Sigmoid colon (tissue), 7 donors: ENCODE measurements at regions of chr11 and their contacts with region 1.

Region 1: DNA sequence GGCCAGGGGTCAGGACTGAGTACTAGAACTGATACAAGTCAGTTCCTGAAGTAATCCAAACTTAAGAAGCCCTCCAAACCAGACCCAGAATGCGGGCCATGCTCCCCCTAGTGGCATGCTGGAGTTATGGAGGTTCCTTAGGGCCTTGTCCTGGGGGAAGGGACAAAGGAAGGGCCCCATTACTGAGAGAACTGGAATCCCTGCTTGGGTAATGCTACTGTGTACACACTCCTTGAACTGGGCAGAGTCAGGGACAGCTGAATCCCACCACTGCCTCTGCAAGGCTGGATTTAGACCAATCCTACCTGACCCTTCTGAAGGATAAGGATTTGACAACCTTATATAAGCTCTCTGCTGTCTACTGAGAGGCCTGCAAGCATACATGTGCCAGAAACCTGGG is 97.3 kb upstream of the AKIP1 start:
- DNase-seq: peak; percentile 92
- H3K4me3 ChIP-seq: no peak overlapping the region
- H3K27ac ChIP-seq: peak overlapping the region; percentile 33 to 97 (median 96)
- H3K4me1 ChIP-seq: peaks cover 0 to 35% (median 30%) of the 10 kb centered on the region in 4 donors
- H3K27me3 ChIP-seq: no peaks in the 10 kb centered on the region
- CTCF ChIP-seq: peak; percentile 82 to 92 (median 86)
- EP300 ChIP-seq: no peak
- POLR2A ChIP-seq: no peak

Region 2: DNA sequence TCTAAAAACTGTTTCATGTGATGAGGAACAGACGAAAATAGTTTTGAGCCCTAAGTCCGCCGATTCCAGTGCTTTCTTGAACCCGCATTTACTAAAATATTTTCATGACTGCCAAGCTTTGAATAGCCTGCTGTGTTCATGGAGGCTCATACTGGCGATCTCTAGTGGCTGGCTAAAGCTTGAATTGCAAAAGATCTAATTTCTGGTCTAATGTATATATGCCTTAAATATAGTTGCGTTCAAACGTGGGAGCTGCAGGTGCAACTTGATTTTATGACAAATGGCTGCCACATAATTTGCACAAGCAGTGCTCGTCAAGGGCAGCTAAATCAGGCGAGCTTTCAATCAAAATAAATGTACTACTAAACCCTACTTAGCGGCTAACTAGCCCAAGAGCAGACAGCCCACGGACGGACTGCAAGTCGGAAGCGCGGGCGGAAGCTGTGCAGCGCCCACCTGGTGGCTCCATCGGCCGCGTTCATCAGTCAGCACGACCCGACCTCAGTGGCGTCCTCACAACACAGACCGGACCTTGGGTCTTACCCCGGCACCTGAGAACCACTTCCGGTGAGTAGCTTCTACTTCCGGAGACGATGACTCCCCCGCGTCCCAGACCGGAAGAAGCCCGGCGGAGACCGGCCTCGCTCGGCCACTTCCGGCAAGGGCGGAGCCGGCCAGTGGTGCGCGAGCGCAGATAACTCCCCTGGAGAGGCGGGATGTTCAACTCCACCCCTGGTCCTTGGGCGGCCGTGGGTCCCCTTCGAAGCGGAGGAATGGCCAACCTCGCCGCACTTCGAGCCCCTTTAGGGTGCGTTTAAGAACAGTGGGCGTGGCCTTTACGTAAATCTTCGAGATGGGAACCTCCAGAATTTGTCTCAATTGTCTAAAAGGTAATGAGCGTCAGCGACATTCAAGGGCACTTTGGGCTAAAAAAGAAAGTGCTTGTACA is 125.0 kb before region 1 on chr11:
- intact Hi-C with region 1: loop called (anchors 2 kb)
- DNase-seq: peak; percentile 97
- H3K4me3 ChIP-seq: peak overlapping the region; percentile 42 to 64 (median 56)
- H3K27ac ChIP-seq: peak overlapping the region; percentile 83 to 89 (median 88)
- H3K4me1 ChIP-seq: peaks cover 0 to 35% (median 23%) of the 10 kb centered on the region in 4 donors
- H3K27me3 ChIP-seq: no peaks in the 10 kb centered on the region
- CTCF ChIP-seq: no peak
- EP300 ChIP-seq: peak in 1 of 4 donors; percentile 50
- POLR2A ChIP-seq: peak; percentile 41 to 64

Region 3: DNA sequence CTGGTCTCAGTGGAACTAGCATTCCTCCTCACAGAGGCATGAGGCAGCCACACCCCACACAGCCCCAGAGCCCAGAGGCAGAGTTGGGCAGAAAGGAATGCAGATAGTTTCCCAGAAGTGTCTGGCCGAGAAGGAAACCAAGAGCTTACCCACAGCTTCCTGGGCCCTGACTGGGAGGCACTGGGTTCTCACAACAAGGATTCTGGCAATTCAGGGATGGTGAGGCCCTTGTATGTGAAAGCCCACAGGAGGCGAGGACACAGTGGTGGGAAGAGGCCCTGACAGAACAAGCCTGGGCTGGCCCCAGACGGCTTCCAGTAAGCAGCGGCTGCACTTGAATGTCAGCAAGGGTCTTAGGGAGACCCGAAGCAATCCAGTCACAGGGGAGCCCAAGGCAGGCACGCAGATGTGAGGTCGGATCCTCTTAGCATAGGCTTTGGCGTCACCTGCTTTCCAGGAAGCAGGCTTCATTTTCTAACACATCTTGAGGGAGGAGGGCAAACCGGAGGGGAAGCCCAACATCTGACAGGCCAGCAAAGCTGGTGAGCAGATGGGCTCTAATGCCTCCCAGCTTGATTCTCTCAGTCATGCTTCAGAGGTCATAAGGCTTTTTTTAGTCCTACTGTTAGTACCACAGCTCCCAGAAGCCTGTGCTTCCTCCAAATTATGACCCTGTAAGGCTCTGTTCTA is 19.1 kb after region 1 on chr11:
- intact Hi-C with region 1: loop called (anchors 2 kb)
- DNase-seq: peak; percentile 64
- H3K4me3 ChIP-seq: no peak overlapping the region
- H3K27ac ChIP-seq: peak overlapping the region; percentile 70 to 87 (median 82)
- H3K4me1 ChIP-seq: peaks cover 0 to 27% (median 17%) of the 10 kb centered on the region in 4 donors
- H3K27me3 ChIP-seq: no peaks in the 10 kb centered on the region
- CTCF ChIP-seq: no peak
- EP300 ChIP-seq: peak in 1 of 4 donors; percentile 46
- POLR2A ChIP-seq: no peak

Region 4: DNA sequence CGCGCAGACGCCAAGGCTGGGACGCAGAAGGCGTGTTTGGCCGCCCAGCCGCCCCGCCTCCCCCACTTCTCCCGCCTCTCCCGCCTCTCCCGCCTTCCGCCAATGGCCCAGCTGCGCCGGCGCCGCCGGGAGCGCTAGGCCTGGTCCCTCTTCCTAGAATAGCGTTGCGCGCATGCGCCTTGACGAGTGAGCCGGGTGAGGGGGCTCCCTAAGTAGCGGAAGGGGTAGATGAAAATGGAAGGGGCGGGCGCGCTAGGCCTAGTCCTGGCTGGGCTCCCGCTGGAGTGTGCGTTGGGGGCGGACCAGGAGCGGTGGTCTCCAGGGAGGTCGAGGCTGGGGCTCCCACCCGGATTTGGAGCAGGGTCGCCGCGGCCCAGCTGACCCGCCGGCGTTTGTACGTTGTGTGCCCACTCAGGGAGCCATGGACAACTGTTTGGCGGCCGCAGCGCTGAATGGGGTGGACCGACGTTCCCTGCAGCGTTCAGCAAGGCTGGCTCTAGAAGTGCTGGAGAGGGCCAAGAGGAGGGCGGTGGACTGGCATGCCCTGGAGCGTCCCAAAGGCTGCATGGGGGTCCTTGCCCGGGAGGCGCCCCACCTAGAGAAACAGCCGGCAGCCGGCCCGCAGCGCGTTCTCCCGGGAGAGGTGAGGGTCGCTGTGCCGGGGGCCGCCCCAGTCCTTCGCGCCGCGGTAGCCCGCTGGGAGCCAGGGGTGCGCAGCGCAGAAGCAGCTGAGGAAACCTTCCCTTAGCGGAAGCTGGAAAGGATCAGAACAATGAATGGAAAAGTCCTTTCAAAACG is 97.6 kb after region 1 on chr11 and contains the start of gene AKIP1:
- intact Hi-C with region 1: loop called (anchors 5 kb)
- DNase-seq: peak; percentile 98
- H3K4me3 ChIP-seq: peak within 1 kb of the TSS; percentile 62 to 69 (median 63)
- H3K27ac ChIP-seq: peak within 1 kb of the TSS; percentile 89 to 97 (median 92)
- H3K4me1 ChIP-seq: peaks cover 0 to 44% (median 35%) of the 10 kb centered on the region in 4 donors
- H3K27me3 ChIP-seq: no peaks in the 10 kb centered on the region
- CTCF ChIP-seq: no peak
- EP300 ChIP-seq: no peak
- POLR2A ChIP-seq: peak; percentile 50 to 80
- total RNA-seq, gene AKIP1: 21.6 to 33.2 (median 26.5) TPM

Region 5: GRCh38 chr11:8934749-8935478 is 121.3 kb after region 1 on chr11:
- intact Hi-C with region 1: no loop called
- DNase-seq: no peak
- H3K4me3 ChIP-seq: no peak overlapping the region
- H3K27ac ChIP-seq: no peak overlapping the region
- H3K4me1 ChIP-seq: no peaks in the 10 kb centered on the region
- H3K27me3 ChIP-seq: no peaks in the 10 kb centered on the region
- CTCF ChIP-seq: no peak
- EP300 ChIP-seq: no peak
- POLR2A ChIP-seq: no peak